ENCODE measurements at regions of chr17 and their contacts with region 1.

Region 1: DNA sequence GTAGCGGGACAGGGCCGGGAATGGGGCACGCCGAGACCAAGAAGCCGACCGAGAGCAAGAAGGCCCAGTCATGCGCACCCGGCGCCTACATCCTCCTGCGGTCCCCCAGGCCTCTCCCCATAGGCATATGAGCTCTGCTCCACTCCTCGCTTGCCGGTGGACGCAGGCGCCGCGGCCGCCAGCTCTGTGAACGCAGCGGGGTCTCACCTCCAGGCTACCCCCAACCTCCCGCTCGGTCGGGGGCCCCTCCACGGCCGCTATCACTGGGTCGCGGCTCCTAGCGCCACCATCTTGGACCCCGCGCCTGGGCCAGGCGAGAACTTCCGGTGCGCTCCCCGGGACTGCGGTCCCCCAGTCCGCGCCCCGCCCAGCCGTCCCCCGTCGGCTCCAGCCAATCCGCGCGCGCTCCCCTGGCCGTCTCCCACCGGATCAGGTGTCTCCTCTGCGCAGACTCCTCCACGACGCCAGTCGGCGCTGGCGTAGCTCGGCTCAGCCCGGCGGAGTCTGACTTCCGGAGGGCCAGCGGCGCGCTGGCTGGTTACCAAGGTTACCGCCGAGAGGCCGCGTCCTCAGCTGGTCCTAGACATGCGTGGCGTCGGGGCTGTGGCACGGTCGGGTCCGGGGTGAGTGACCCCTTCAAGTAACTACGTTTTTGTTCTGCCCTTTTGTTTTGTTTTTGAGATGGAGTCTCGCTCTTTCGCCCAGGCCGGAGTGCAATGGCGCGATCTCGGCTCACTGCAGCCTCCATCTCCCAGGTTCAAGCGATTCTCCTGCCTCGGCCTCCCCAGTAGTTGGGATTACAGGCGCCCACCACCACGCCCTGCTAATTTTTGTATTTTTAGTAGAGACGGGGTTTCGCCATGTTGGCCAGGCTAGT is at the start of gene ZNF594:
- H3K4me3 ChIP-seq: peak within 1 kb of the TSS; percentile 83
- H3K27ac ChIP-seq: peak within 1 kb of the TSS; percentile 70
- H3K4me1 ChIP-seq: no peaks in the 10 kb centered on the region
- CTCF ChIP-seq: peak; percentile 98

Region 2: GRCh38 chr17:5181509-5182305 is 10.1 kb before region 1 on chr17:
- CTCF ChIA-PET with region 1: interaction called, 4 read pairs
- POLR2A ChIA-PET with region 1: interaction called, 13 read pairs
- H3K4me3 ChIP-seq: no peak overlapping the region
- H3K27ac ChIP-seq: no peak overlapping the region
- H3K4me1 ChIP-seq: no peaks in the 10 kb centered on the region
- CTCF ChIP-seq: no peak

Measured in HEK293 (cell line).